ENCODE measurements at regions of chrX and their contacts with region 1.

Region 1: DNA sequence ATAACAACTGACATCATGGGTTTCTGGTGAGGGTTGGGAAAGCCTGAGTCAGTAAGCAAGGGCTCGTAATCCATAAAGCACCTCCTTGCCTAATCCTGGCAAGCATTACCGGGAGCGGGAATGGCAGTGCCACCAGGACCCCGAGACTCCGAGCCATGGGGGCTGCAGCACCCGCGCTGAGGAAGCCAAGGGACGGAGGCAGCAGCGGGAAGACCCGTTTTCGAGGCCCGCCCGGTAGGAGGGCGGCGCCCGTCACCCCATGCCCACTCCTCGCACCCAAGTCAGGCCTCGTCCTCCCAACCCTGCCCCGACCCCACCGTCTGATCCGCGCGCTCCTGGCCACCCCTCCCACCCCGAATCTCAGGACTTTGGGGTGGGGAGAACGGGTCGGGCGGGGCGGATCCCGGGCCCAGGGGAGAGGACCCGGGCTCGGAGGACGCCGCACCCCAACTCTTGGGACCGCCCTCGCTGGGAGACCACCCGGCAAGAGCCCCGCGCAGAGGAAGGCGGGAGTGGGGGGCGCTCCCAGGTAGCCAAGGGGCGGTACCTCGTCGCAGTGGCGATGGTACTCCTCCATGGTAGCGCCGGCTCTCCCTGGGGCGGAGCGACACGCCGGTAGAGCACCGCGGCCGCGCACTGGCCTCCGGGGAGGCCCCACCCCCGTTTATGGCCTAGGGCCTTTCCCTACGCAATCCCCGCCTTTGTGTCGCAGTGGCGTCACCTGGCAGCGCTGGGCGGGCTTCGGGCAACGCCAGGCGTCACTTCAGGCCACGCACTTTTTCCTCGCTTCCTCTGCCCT is at the start of gene DYNLT3:
- DNase-seq: peak; percentile 77
- H3K4me3 ChIP-seq: peak within 1 kb of the TSS; percentile 51 to 74 (median 66)
- H3K27ac ChIP-seq: peak within 1 kb of the TSS; percentile 79
- H3K4me1 ChIP-seq: no peaks in the 10 kb centered on the region
- H3K27me3 ChIP-seq: no peaks in the 10 kb centered on the region
- CTCF ChIP-seq: no peak
- total RNA-seq, gene DYNLT3: 36.8 to 47.3 TPM

Region 2: GRCh38 chrX:37543324-37543723 is 303.8 kb before region 1 on chrX:
- CTCF ChIA-PET with region 1: no interaction called
- dilution Hi-C with region 1: no loop called
- in situ Hi-C with region 1: loop called in 1 of 2 experiments (anchors 25 kb)
- intact Hi-C with region 1: no loop called
- DNase-seq: no peak
- H3K4me3 ChIP-seq: no peak overlapping the region
- H3K27ac ChIP-seq: no peak overlapping the region
- H3K4me1 ChIP-seq: no peaks in the 10 kb centered on the region
- H3K27me3 ChIP-seq: no peaks in the 10 kb centered on the region
- CTCF ChIP-seq: no peak

Region 3: DNA sequence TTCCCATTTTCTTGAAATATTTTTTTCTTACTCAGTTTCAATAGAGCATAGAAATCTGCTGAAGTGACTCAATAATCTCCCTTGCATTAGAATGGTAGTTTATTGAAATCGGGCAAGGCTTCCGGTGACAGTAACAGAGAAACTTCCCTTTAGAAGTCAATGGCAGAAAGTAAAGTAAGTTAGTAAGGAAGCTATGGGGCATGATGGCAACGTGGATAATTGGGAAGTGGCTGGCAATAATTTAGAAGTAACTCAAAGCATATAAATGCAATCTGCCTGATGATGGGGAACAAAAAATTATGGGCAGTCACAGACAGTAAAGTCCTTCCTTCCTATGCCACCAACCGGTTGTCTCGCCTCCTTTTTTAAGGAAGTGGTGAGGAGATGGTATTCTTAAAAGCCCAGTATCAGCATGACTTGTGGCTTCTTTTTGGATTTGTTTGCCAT is 59.7 kb before region 1 on chrX:
- CTCF ChIA-PET with region 1: no interaction called
- dilution Hi-C with region 1: no loop called
- in situ Hi-C with region 1: no loop called
- intact Hi-C with region 1: no loop called
- DNase-seq: no peak
- H3K4me3 ChIP-seq: no peak overlapping the region
- H3K27ac ChIP-seq: no peak overlapping the region
- H3K4me1 ChIP-seq: no peaks in the 10 kb centered on the region
- H3K27me3 ChIP-seq: peaks cover 2% of the 10 kb centered on the region
- CTCF ChIP-seq: no peak

Region 4: DNA sequence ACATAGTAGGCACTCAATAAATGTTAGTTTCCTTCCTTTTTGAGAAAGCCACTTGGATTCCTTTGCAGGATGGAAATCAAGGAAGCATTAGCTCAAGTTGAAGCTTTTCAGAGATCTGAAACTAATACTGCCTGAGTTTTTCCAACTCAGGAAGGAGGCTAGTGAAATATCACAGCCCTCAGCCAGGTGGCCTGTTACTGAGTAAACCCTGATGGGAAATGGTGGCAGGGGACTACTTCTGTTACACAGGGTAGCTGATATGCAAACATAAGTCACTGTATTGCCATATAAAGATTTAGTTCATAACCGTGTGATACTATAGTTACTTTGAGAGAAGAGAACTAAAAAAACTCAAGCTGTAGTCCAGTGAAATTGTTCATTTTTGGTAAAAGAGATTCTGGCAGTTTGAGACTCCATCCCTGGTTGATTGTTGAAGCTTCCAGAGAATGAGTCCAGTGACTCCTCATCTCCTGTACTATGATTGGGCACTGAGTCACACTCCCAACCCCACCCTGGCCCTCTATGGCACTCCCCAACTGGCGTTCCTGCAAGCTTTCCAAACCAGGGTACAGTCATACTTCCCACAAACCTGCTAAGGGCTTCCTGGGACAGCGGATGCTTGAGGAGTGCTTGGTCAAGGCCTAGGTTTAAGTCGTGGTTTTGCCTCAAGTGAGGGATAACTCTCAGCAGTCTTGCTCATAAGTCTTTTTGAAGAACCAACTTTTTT is 1035.9 kb after region 1 on chrX:
- CTCF ChIA-PET with region 1: no interaction called
- dilution Hi-C with region 1: no loop called
- in situ Hi-C with region 1: no loop called
- intact Hi-C with region 1: no loop called
- DNase-seq: peak; percentile 93
- H3K4me3 ChIP-seq: no peak overlapping the region
- H3K27ac ChIP-seq: peak overlapping the region; percentile 91
- H3K4me1 ChIP-seq: peaks cover 20% of the 10 kb centered on the region
- H3K27me3 ChIP-seq: no peaks in the 10 kb centered on the region
- CTCF ChIP-seq: no peak

Measured in mammary epithelial cell (primary cell).